ENCODE measurements at regions of chr18 and their contacts with region 1.

Region 1: GRCh38 chr18:62957885-62958472 is 242.6 kb downstream of the PHLPP1 start:
- DNase-seq: no peak
- H3K4me3 ChIP-seq: no peak overlapping the region
- CTCF ChIP-seq: peak; percentile 13

Region 2: GRCh38 chr18:62714671-62715435 is 243.1 kb before region 1 on chr18:
- CTCF ChIA-PET with region 1: interaction called, 22 read pairs
- POLR2A ChIA-PET with region 1: interaction called, 3 read pairs
- DNase-seq: peak; percentile 99
- H3K4me3 ChIP-seq: peak overlapping the region; percentile 76
- CTCF ChIP-seq: peak; percentile 76

Region 3: DNA sequence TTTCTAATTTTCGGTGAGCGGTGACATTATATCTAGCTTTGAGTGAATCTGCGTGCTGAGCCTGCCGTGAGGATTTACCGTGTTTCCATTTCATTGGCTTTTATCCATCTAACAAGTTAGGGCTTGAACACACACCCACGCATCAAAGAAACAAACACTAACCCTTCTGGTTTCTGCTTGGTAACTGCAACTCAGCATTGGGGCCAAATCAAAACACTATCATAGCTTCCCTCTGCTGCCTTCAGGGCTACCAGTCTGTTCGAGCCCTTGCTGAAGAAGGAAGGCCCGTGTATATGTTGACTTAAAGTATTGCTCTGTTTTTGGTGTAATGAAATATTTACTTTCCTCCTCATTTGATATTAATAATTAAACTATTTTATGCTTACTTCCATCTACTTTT is 15.4 kb before region 1 on chr18:
- CTCF ChIA-PET with region 1: interaction called, 13 read pairs
- POLR2A ChIA-PET with region 1: no interaction called
- DNase-seq: no peak
- H3K4me3 ChIP-seq: no peak overlapping the region
- CTCF ChIP-seq: no peak

Measured in AG04449 (cell line).